Activated B cell treated with CpG ODN at 0.5 μM for 24 hours (primary cell): ENCODE measurements at regions of chr12 and their contacts with region 1.

Region 1: DNA sequence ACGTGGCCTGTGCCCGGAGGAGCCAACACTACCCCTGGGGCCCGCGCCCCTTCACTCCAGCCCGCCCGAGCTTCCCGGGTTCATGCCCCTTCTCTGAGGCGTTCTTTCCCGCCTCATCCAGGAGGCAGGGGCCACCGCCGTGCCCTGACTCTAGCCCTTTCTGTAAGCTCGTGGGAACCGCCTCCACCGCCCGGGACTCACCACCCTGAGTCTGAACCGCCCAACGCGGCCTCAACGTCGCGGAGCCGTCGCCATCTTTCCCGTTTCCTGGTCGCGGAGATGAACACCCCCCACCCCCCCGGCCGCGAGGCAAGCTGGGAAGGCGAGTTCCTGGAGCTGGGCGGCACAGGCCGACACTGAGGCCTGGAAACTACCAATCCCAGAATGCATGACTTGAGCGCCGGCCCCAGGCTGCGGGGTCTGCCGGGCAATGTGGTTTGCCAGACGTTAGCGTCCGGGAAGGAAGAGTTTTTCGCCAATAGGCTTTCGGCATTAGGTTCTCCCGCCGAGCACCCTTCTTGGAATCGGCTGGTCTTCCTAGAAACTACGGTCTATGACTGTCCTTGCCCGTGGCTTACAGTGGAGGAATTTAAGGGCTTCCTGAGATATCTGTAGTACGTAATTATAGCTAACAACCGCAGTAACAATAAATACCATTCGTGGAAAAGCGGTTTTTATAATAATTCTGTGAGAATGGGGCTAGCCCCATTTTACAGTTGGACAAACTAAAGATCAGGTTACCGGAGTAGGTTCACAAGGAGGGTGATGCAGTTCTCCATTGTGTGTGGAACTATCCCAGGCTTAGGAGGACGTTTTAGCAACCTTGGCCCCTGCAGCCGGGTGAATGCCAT is at the start of gene DDX23:
- DNase-seq: peak; percentile 75
- ATAC-seq: peak; percentile 98
- H3K4me3 Mint-ChIP-seq: peak within 1 kb of the TSS; percentile 98
- H3K27ac Mint-ChIP-seq: peak within 1 kb of the TSS; percentile 93
- H3K4me1 Mint-ChIP-seq: peaks cover 36% of the 10 kb centered on the region
- H3K27me3 Mint-ChIP-seq: no peaks in the 10 kb centered on the region
- CTCF ChIP-seq: no peak
- total RNA-seq, gene DDX23: 116 and 118 TPM in 2 replicates

Region 2: GRCh38 chr12:48542300-48542928 is 309.7 kb before region 1 on chr12:
- CTCF ChIA-PET with region 1: no interaction called
- POLR2A ChIA-PET with region 1: no interaction called
- intact Hi-C with region 1: no loop called
- DNase-seq: no peak
- ATAC-seq: no peak
- H3K4me3 Mint-ChIP-seq: no peak overlapping the region
- H3K27ac Mint-ChIP-seq: no peak overlapping the region
- H3K4me1 Mint-ChIP-seq: no peaks in the 10 kb centered on the region
- H3K27me3 Mint-ChIP-seq: peaks cover 3% of the 10 kb centered on the region
- CTCF ChIP-seq: no peak

Region 3: GRCh38 chr12:48814262-48815125 is 37.6 kb before region 1 on chr12:
- CTCF ChIA-PET with region 1: interaction called, 8 read pairs
- POLR2A ChIA-PET with region 1: interaction called, 9 read pairs
- intact Hi-C with region 1: loop called (anchors 1 kb)
- DNase-seq: peak; percentile 88
- ATAC-seq: peak; percentile 83
- H3K4me3 Mint-ChIP-seq: peak overlapping the region; percentile 92
- H3K27ac Mint-ChIP-seq: peak overlapping the region; percentile 18
- H3K4me1 Mint-ChIP-seq: peaks cover 38% of the 10 kb centered on the region
- H3K27me3 Mint-ChIP-seq: peaks cover 13% of the 10 kb centered on the region
- CTCF ChIP-seq: peak; percentile 97

Region 4: DNA sequence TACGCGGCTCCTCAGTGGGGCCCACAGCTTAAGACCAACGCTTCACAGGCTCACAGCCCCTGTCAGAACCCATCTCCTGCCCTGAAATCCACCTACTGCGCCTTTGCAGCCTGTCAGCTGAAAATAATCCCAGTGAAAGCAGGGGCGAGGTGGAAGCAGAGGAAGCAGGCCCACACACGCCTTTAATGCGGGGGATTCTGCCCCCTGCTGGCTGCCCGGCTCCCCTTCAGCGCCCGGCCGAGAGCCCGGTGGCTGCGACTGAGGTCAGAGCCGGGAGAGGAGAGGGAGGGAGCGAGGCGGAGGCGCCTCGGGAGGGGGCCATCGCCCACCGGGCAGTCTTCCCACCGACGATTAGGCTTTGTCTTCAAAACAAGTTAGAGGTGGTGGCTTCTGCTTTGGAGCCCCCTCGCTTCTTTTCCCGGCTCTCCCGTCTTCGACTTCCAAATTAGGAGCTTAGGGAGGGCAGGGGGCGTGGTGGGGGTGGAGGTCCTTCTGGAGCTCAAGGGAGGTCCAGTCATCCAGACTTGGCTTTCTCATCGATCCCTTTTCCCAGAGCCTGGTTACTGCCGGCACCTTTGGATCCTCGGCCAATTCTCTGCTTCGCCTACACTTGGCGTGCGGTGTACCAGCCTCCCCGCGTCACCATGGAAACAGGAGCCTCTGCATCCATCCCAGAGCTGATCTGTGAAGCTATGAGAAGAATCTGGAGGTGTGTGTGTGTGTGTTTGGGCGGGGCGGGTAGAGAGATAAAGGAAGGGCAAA is 38.7 kb after region 1 on chr12:
- CTCF ChIA-PET with region 1: interaction called, 207 read pairs
- POLR2A ChIA-PET with region 1: interaction called, 30 read pairs
- intact Hi-C with region 1: loop called (anchors 1 kb)
- DNase-seq: peak; percentile 74
- ATAC-seq: peak; percentile 98
- H3K4me3 Mint-ChIP-seq: no peak overlapping the region
- H3K27ac Mint-ChIP-seq: no peak overlapping the region
- H3K4me1 Mint-ChIP-seq: no peaks in the 10 kb centered on the region
- H3K27me3 Mint-ChIP-seq: peaks cover 14% of the 10 kb centered on the region
- CTCF ChIP-seq: peak; percentile 75

Region 5: GRCh38 chr12:48977315-48978281 is 125.5 kb after region 1 on chr12:
- CTCF ChIA-PET with region 1: interaction called, 12 read pairs
- POLR2A ChIA-PET with region 1: interaction called, 5 read pairs
- intact Hi-C with region 1: loop called (anchors 1 kb)
- DNase-seq: peak; percentile 79
- ATAC-seq: peak; percentile 72
- H3K4me3 Mint-ChIP-seq: peak overlapping the region; percentile 68
- H3K27ac Mint-ChIP-seq: peak overlapping the region; percentile 64
- H3K4me1 Mint-ChIP-seq: peaks cover 42% of the 10 kb centered on the region
- H3K27me3 Mint-ChIP-seq: peaks cover 50% of the 10 kb centered on the region
- CTCF ChIP-seq: peak; percentile 45

Region 6: GRCh38 chr12:49018261-49019119 is 166.4 kb after region 1 on chr12 and contains the start of gene PRKAG1:
- CTCF ChIA-PET with region 1: interaction called, 6 read pairs
- POLR2A ChIA-PET with region 1: interaction called, 4 read pairs
- intact Hi-C with region 1: loop called (anchors 1 kb)
- DNase-seq: peak; percentile 97
- ATAC-seq: peak; percentile 86
- H3K4me3 Mint-ChIP-seq: peak within 1 kb of the TSS; percentile 93
- H3K27ac Mint-ChIP-seq: peak within 1 kb of the TSS; percentile 98
- H3K4me1 Mint-ChIP-seq: peaks cover 31% of the 10 kb centered on the region
- H3K27me3 Mint-ChIP-seq: no peaks in the 10 kb centered on the region
- CTCF ChIP-seq: no peak
- total RNA-seq, gene PRKAG1: 55.3 and 70.5 TPM in 2 replicates